AG04449 (cell line): ENCODE measurements at regions of chr19 and their contacts with region 1.

Region 1: GRCh38 chr19:50368649-50369570 is 3.5 kb upstream of the NAPSA start:
- DNase-seq: peak; percentile 28
- H3K4me3 ChIP-seq: peak overlapping the region; percentile 80
- CTCF ChIP-seq: peak; percentile 79

Region 2: DNA sequence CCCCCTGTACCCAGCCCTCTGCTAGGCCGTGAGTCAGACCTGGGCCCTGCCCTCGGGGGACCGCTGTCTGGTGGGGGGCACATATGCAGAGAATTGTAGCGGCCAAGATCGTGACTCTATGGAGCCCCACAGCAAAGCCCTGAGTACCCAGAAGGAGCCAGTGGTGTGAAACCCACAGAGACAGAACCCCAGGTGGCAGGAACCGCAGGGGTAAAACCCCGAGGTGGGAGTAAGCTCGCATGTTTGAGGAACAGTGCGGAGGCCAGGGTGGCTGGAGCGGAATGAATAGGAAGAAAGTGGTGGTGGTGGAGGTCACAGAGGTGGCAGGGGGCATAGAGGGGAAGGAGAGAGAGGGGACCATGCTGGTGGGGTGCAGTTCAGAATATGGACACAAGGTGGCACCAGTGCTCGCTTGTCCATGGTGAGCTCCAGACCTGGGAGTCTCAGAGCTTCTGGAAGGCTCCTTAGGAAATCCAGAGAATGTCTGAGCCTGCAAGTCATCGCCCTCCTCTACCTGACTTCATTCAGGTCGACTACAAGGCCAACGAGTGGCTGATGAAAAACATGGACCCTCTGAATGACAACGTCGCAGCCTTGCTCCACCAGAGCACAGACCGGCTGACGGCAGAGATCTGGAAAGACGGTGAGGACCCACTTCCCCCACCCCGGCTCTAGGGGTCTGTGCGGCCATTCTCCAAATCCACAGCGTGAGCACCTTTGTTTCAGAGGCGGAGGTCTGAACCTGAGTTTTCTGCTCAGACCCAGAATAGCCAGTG is 116.6 kb before region 1 on chr19:
- CTCF ChIA-PET with region 1: no interaction called
- POLR2A ChIA-PET with region 1: no interaction called
- DNase-seq: no peak
- H3K4me3 ChIP-seq: no peak overlapping the region
- CTCF ChIP-seq: peak; percentile 45

Region 3: DNA sequence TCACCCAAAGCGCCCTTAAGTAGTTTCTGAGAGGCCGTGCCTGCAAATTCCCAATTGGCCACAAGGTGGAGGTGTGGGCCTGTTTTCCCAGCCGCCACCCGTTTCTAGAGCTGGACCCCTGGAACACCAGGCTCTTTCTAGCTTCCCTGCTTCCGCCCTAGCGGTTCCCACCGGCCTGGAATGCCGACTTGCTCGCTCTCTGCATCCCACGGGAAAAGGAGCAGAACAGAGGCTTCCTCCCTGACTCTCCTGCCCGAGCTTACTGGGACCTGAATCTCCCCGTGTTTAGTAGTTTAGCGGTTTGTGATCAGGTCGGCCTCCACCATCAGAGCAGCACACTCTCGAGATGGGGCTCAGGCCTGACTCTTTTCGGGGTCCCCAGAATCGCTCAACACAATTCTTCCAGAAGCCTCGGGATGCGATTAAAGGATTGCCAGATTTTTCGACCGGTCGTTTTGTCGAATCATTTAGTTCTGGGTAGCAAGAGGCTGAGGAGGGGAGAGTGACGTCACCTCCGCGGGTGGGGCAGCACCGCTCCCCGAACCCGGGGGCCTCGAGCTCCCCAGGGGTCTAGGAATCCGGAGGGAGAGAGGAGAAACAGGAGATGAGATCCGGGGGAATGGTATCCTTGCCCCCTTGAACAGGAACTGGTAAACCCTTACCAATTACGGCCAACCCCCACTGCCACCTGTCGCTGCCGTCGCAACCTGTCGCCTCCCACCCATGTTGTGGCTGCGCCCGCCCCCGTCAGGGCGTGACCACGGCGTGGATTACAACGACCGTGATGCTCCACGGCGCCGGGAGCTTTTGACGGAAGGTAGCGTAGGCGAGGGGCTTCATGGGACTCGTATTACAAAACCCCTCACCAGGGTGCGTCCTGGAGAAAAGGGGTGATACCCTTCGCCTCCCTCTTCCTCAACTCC is 11.5 kb before region 1 on chr19:
- CTCF ChIA-PET with region 1: interaction called, 38 read pairs
- POLR2A ChIA-PET with region 1: interaction called, 4 read pairs
- DNase-seq: no peak
- H3K4me3 ChIP-seq: peak overlapping the region; percentile 45
- CTCF ChIP-seq: peak; percentile 73

Region 4: DNA sequence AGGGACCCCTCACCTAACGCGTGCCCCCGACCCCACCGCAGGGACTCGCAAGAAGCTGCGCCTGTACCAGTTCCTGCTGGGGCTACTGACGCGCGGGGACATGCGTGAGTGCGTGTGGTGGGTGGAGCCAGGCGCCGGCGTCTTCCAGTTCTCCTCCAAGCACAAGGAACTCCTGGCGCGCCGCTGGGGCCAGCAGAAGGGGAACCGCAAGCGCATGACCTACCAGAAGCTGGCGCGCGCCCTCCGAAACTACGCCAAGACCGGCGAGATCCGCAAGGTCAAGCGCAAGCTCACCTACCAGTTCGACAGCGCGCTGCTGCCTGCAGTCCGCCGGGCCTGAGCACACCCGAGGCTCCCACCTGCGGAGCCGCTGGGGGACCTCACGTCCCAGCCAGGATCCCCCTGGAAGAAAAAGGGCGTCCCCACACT is 59.1 kb after region 1 on chr19:
- CTCF ChIA-PET with region 1: no interaction called
- POLR2A ChIA-PET with region 1: no interaction called
- DNase-seq: peak; percentile 5
- H3K4me3 ChIP-seq: peak overlapping the region; percentile 25
- CTCF ChIP-seq: no peak

Region 5: DNA sequence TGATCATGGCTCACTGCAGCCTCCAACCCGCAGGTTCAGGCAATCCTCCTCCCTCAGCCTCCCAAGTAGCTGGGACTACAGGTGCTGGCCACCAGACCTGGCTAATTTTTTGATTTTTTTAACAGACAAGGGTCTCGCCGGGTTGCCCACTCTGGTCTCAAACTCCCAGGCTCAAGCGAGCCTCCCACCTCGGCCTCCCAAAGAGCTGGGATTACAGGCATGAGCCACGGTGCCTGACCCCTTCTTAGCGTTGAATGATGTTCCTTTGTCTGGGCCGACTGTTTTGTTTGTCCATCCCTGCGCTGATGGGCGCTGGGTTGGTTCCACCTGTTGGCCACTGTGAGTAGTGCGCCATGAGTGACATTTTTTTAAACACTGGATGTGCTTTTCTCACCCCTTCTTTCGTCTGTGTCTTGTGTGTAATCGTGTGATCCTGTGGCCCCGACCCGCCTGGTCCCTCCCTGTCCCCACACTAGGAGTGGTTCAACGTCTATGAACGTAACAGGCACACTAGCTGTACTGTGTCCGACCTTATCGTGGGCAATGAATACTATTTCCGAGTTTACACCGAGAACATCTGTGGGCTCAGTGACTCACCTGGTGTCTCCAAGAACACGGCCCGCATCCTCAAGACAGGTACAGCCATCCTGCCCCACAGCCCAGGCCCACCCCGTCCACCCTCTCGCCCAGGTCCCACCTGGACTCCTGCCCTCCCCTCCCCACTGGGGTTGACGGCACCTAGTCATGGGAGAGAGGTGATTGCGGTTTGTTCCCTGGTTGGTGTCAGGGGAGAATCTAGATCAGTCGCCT is 92.4 kb after region 1 on chr19:
- CTCF ChIA-PET with region 1: interaction called, 132 read pairs
- POLR2A ChIA-PET with region 1: no interaction called
- DNase-seq: no peak
- H3K4me3 ChIP-seq: no peak overlapping the region
- CTCF ChIP-seq: peak; percentile 88

Region 6: GRCh38 chr19:50511068-50511822 is 142.3 kb after region 1 on chr19 and contains the start of gene JOSD2:
- CTCF ChIA-PET with region 1: interaction called, 11 read pairs
- POLR2A ChIA-PET with region 1: no interaction called
- DNase-seq: peak; percentile 94
- H3K4me3 ChIP-seq: peak within 1 kb of the TSS; percentile 89
- CTCF ChIP-seq: no peak

Region 7: GRCh38 chr19:50785329-50785728 is 416.4 kb after region 1 on chr19:
- CTCF ChIA-PET with region 1: interaction called, 10 read pairs
- POLR2A ChIA-PET with region 1: no interaction called
- DNase-seq: no peak
- H3K4me3 ChIP-seq: no peak overlapping the region
- CTCF ChIP-seq: no peak